Left colon (tissue), 2 donors: ENCODE measurements at regions of chr3 and their contacts with region 1.

Region 1: GRCh38 chr3:33636125-33636850 is 81.8 kb downstream of the CLASP2 start:
- DNase-seq: no peak
- ATAC-seq: peak; percentile 38

Region 2: GRCh38 chr3:32675164-32675563 is 961.1 kb before region 1 on chr3:
- intact Hi-C with region 1: no loop called
- DNase-seq: no peak
- ATAC-seq: no peak

Region 3: GRCh38 chr3:33496449-33496848 is 139.8 kb before region 1 on chr3:
- intact Hi-C with region 1: no loop called
- DNase-seq: no peak
- ATAC-seq: no peak

Region 4: GRCh38 chr3:33746412-33747116 is 110.3 kb after region 1 on chr3:
- intact Hi-C with region 1: no loop called
- DNase-seq: no peak
- ATAC-seq: no peak

Region 5: DNA sequence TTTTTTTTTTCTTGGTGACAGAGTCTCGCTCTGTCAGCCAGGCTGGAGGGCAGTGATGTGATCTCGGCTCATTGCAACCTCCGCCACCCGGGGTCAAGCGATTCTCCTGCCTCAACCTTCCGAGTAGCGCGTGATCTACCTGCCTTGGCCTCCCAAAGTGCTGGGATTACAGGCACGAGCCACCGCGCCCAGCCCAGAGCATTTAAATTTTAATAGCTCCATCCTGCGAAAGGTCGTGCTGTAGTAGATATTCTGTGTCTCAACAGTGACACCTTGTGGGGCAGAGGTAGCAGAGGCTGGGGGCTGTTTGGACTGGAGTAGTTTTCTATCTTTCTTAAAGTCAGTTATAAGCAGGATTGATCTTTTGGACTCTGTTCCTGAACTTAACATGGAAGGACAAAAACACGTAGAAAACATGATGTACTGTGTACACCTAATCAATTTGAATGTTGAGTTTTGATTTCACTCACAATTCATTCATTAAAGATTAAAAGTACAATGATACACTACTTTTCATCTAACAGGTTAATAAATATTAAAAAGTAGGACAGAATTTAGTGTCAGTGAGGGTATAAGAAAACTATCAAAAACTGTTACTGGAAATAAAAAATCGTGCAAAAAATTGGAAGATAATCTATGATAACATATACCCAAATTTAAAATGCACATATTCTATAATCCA is 151.2 kb after region 1 on chr3:
- intact Hi-C with region 1: loop called in 1 of 2 experiments (anchors 5 kb)
- DNase-seq: peak; percentile 53 to 69
- ATAC-seq: peak; percentile 85